ENCODE measurements at regions of chr18 and their contacts with region 1.

Region 1: GRCh38 chr18:79068937-79069791 is at the start of gene ATP9B:
- DNase-seq: peak; percentile 100
- ATAC-seq: peak; percentile 76 to 89 (median 82)
- H3K4me3 ChIP-seq: peak within 1 kb of the TSS; percentile 54
- H3K4me3 Mint-ChIP-seq: peak within 1 kb of the TSS; percentile 85
- H3K27ac ChIP-seq: peak within 1 kb of the TSS; percentile 94
- H3K27ac Mint-ChIP-seq: peak within 1 kb of the TSS; percentile 85 to 94
- H3K4me1 ChIP-seq: peaks cover 14% of the 10 kb centered on the region
- H3K4me1 Mint-ChIP-seq: peaks cover 36 to 58% of the 10 kb centered on the region in 2 donors
- H3K27me3 ChIP-seq: no peaks in the 10 kb centered on the region
- H3K27me3 Mint-ChIP-seq: peaks cover 0 to 15% of the 10 kb centered on the region in 2 donors
- CTCF ChIP-seq: no peak
- total RNA-seq, gene ATP9B: 66.0 to 78.9 (median 68.0) TPM

Region 2: DNA sequence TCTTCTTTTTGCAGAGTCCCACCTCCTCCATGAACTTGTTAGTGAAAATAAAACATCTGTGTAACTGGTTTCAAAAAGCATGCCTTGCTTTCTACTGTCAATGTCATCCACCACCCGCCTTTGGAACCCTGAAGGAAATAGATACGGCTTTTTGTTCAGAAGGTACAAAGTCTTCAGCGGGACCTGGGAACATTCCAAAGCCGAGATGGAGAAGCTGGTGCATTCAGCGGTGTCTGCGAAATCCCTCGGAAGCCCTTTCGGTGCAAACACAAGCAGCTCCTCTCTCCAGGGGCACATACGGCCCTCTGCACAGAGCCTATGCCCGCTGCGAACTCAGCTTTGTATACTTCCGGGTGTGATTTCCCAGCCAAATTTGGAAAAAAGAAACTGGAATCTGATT is 645.4 kb before region 1 on chr18:
- intact Hi-C with region 1: no loop called
- DNase-seq: no peak
- ATAC-seq: no peak
- H3K4me3 ChIP-seq: no peak overlapping the region
- H3K4me3 Mint-ChIP-seq: no peak overlapping the region
- H3K27ac ChIP-seq: no peak overlapping the region
- H3K27ac Mint-ChIP-seq: no peak overlapping the region
- H3K4me1 ChIP-seq: no peaks in the 10 kb centered on the region
- H3K4me1 Mint-ChIP-seq: no peaks in the 10 kb centered on the region
- H3K27me3 ChIP-seq: no peaks in the 10 kb centered on the region
- H3K27me3 Mint-ChIP-seq: no peaks in the 10 kb centered on the region
- CTCF ChIP-seq: no peak

Region 3: DNA sequence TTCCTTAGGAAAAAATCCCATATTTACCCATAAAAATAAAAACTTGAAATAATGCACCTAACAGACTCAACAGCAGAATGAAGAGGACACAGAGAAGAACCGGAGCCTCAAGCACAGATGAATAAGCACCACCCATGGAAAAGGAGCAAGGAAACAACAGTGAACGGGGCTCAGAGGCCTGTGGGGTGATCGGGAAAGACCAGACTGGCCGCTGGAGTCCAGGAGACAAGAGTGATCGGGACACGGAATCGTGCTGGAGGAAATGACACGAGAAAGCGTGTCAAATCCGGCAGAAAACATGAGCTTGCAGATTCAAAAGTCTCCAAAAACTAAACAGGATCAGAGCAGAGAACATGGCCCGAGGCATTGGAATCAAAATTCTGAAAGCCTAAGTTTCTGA is 537.5 kb before region 1 on chr18:
- intact Hi-C with region 1: no loop called
- DNase-seq: no peak
- ATAC-seq: no peak
- H3K4me3 ChIP-seq: no peak overlapping the region
- H3K4me3 Mint-ChIP-seq: no peak overlapping the region
- H3K27ac ChIP-seq: no peak overlapping the region
- H3K27ac Mint-ChIP-seq: no peak overlapping the region
- H3K4me1 ChIP-seq: no peaks in the 10 kb centered on the region
- H3K4me1 Mint-ChIP-seq: peaks cover 0 to 4% of the 10 kb centered on the region in 2 donors
- H3K27me3 ChIP-seq: no peaks in the 10 kb centered on the region
- H3K27me3 Mint-ChIP-seq: peaks cover 4 to 12% of the 10 kb centered on the region in 2 donors
- CTCF ChIP-seq: no peak

Region 4: GRCh38 chr18:78643004-78643403 is 426.2 kb before region 1 on chr18:
- intact Hi-C with region 1: loop called (anchors 10 kb)
- DNase-seq: peak in 1 of 2 donors; percentile 63
- ATAC-seq: peak; percentile 72 to 88 (median 87)
- H3K4me3 ChIP-seq: no peak overlapping the region
- H3K4me3 Mint-ChIP-seq: peak overlapping the region; percentile 49
- H3K27ac ChIP-seq: peak overlapping the region; percentile 54
- H3K27ac Mint-ChIP-seq: peak overlapping the region; percentile 79 to 90
- H3K4me1 ChIP-seq: peaks cover 13% of the 10 kb centered on the region
- H3K4me1 Mint-ChIP-seq: peaks cover 18 to 63% of the 10 kb centered on the region in 2 donors
- H3K27me3 ChIP-seq: no peaks in the 10 kb centered on the region
- H3K27me3 Mint-ChIP-seq: peaks cover 0 to 6% of the 10 kb centered on the region in 2 donors
- CTCF ChIP-seq: no peak

Region 5: DNA sequence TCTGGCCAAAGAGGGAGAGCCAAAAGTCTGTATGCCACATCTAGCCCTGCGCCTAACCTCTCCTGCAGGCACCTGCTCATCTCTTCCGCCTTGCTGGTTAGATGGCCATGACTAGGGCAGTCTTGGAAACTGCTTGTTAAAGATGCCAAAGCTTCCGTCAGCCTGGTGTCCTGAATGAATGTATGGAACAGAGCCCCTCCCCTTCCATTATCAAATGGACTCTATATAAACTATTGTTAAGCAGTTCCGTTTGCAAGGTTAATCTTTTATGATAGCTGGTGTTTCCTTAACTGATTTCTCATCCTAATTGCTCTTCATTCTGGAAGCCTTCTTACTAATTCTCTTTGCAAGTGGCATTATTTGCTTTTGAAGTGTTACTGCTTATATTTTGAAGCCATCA is 87.2 kb after region 1 on chr18:
- intact Hi-C with region 1: loop called (anchors 2 kb)
- DNase-seq: no peak
- ATAC-seq: no peak
- H3K4me3 ChIP-seq: no peak overlapping the region
- H3K4me3 Mint-ChIP-seq: peak overlapping the region; percentile 45
- H3K27ac ChIP-seq: peak overlapping the region; percentile 72
- H3K27ac Mint-ChIP-seq: peak overlapping the region; percentile 90 to 94
- H3K4me1 ChIP-seq: peaks cover 17% of the 10 kb centered on the region
- H3K4me1 Mint-ChIP-seq: peaks cover 35 to 41% of the 10 kb centered on the region in 2 donors
- H3K27me3 ChIP-seq: no peaks in the 10 kb centered on the region
- H3K27me3 Mint-ChIP-seq: no peaks in the 10 kb centered on the region
- CTCF ChIP-seq: no peak

Region 6: DNA sequence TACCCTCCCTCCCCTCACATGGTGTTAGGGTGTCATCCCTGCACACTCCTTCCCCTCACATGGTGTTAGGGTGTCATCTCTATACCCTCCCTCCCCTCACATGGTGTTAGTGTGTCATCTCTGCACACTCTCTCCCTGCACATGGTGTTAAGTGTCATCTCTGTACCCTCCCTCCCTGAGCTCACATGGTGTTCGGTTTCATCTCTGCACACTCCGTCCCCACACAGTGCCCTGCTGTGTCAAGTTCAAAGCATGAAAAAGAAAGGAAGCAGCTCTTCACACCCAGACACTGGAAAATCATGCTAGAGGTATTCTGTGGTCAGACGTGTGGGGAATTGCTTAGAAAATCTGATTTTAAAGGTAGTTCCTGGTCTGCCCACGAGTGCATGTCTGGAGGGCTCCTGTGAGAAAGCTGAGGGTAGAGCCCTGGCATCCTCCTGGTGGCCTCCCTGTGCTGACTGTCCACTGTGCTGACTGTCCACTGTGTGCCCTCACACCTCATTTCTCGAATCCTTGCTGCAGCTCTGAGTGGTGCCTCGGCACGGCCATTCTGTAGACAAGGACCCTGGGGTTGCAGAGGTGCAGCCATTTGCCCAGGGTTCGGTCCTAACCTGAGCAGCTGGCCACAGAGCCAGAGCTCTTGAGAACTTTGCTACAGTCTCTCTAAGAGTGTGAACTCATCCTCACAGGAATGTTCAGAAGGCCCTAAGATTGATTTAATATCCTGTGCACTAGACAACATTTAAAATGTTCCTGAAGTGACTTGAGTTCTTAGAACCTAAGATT is 257.4 kb after region 1 on chr18:
- intact Hi-C with region 1: loop called (anchors 5 kb)
- DNase-seq: peak; percentile 35 to 51
- ATAC-seq: peak; percentile 83 to 89 (median 87)
- H3K4me3 ChIP-seq: no peak overlapping the region
- H3K4me3 Mint-ChIP-seq: peak overlapping the region; percentile 82
- H3K27ac ChIP-seq: peak overlapping the region; percentile 53
- H3K27ac Mint-ChIP-seq: peak overlapping the region; percentile 88 to 89
- H3K4me1 ChIP-seq: peaks cover 26% of the 10 kb centered on the region
- H3K4me1 Mint-ChIP-seq: peaks cover 12 to 22% of the 10 kb centered on the region in 2 donors
- H3K27me3 ChIP-seq: no peaks in the 10 kb centered on the region
- H3K27me3 Mint-ChIP-seq: no peaks in the 10 kb centered on the region
- CTCF ChIP-seq: no peak

Region 7: GRCh38 chr18:79523736-79524180 is 454.6 kb after region 1 on chr18:
- intact Hi-C with region 1: loop called (anchors 5 kb)
- DNase-seq: peak; percentile 39 to 92
- ATAC-seq: peak; percentile 47 to 75 (median 64)
- H3K4me3 ChIP-seq: peak overlapping the region; percentile 41
- H3K4me3 Mint-ChIP-seq: peak overlapping the region; percentile 92
- H3K27ac ChIP-seq: peak overlapping the region; percentile 88
- H3K27ac Mint-ChIP-seq: peak overlapping the region; percentile 90 to 91
- H3K4me1 ChIP-seq: peaks cover 50% of the 10 kb centered on the region
- H3K4me1 Mint-ChIP-seq: peaks cover 32 to 62% of the 10 kb centered on the region in 2 donors
- H3K27me3 ChIP-seq: no peaks in the 10 kb centered on the region
- H3K27me3 Mint-ChIP-seq: no peaks in the 10 kb centered on the region
- CTCF ChIP-seq: no peak